GM12878 (cell line): ENCODE measurements at regions of chr3 and their contacts with region 1.

Region 1: DNA sequence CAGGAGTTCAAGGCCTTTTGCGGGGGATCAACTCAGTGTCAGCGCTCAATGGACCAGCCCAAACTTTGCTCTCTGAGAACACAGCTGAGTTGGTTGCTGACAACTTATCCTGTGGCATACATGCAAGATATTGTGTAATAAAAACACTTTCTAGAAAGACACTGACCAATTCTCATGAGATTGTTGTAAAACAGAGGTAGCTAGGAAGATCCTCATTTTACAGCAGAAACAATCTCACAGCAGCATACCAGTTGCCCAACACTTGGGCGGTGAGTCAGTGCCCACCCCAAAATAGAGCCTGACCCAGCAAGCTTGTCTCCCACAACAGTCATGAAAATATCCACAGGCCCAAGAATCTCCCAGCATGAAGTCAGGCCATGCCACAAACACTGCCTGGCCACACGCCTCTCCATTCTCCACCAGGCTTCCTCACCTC is 18.2 kb downstream of the KLHL6 start:
- DNase-seq: no peak
- ATAC-seq: no peak
- H3K4me3 ChIP-seq: no peak overlapping the region
- H3K27ac ChIP-seq: no peak overlapping the region
- H3K4me1 ChIP-seq: peaks cover 75% of the 10 kb centered on the region
- H3K27me3 ChIP-seq: no peaks in the 10 kb centered on the region
- CTCF ChIP-seq: no peak
- EP300 ChIP-seq: no peak
- POLR2A ChIP-seq: no peak
- RAD21 ChIP-seq: no peak

Region 2: DNA sequence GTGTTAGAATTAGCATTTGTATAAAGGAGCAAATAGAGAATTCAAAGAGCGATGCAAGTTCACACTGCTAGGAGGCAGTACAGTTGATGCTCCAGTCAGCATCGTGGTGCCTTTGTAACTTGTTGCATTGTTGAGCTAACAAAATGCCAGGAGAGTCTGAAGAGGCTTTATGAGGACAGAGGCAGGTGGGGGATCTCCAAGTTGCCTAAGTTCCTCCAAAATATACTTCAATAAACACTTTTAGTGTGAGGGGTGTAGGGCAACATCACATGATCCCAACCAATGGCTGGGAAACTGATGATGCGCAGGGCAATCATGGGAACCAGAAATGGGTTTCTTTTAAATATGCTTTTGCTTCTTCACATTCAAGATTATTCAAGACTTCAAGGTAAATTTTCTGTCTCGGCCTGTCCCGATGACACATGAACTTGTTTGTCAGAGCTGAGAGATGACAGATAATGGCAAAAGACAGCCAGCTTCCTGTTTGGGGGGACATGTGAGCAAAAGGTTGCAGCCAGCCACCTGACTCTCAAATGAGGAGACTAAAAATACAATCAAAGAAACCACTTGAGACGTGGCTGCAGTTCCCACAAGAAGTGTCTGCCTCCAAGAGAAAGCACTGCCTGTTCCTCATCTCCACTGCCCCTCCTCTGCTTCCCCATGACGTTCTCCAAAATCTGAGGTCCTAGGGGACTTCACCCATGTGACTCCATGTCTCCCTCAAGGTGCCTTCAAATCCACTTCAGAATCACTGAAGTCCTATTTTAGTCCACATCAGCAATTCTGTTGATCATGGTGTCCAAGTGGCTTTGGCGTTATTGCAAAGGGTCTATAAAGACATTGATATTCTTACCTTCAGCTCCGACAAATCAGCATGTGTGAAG is 21.1 kb before region 1 on chr3:
- CTCF ChIA-PET with region 1: interaction called, 10 read pairs
- POLR2A ChIA-PET with region 1: interaction called, 181 read pairs
- RAD21 ChIA-PET with region 1: interaction called, 245 read pairs
- SMC1A ChIA-PET with region 1: interaction called, 190 read pairs
- in situ Hi-C with region 1: no loop called
- intact Hi-C with region 1: no loop called
- DNase-seq: peak; percentile 77
- ATAC-seq: peak; percentile 61
- H3K4me3 ChIP-seq: no peak overlapping the region
- H3K27ac ChIP-seq: peak overlapping the region; percentile 7; the same call in 1 of the 2 replicates
- H3K4me1 ChIP-seq: peaks cover 43% of the 10 kb centered on the region
- H3K27me3 ChIP-seq: no peaks in the 10 kb centered on the region
- CTCF ChIP-seq: peak; percentile 15 to 21 (median 20); a peak in 3 of 6 replicates
- EP300 ChIP-seq: peak in 1 of 2 experiments; percentile 91; a peak in 2 of 4 replicates
- POLR2A ChIP-seq: peak; percentile 33; the same call in 1 of the 2 replicates
- RAD21 ChIP-seq: peak; percentile 32

Region 3: GRCh38 chr3:183576487-183577107 is 39.3 kb after region 1 on chr3:
- CTCF ChIA-PET with region 1: interaction called, 5 read pairs
- POLR2A ChIA-PET with region 1: interaction called, 7 read pairs
- RAD21 ChIA-PET with region 1: interaction called, 82 read pairs
- SMC1A ChIA-PET with region 1: interaction called, 22 read pairs
- in situ Hi-C with region 1: no loop called
- intact Hi-C with region 1: loop called (anchors 1 kb)
- DNase-seq: no peak
- ATAC-seq: no peak
- H3K4me3 ChIP-seq: no peak overlapping the region
- H3K27ac ChIP-seq: no peak overlapping the region
- H3K4me1 ChIP-seq: peaks cover 8% of the 10 kb centered on the region; the same call in 1 of the 2 replicates
- H3K27me3 ChIP-seq: peaks cover 0 to 21% of the 10 kb centered on the region in 2 experiments; a peak in 2 of 4 replicates
- CTCF ChIP-seq: no peak
- EP300 ChIP-seq: no peak
- POLR2A ChIP-seq: no peak
- RAD21 ChIP-seq: no peak

Region 4: DNA sequence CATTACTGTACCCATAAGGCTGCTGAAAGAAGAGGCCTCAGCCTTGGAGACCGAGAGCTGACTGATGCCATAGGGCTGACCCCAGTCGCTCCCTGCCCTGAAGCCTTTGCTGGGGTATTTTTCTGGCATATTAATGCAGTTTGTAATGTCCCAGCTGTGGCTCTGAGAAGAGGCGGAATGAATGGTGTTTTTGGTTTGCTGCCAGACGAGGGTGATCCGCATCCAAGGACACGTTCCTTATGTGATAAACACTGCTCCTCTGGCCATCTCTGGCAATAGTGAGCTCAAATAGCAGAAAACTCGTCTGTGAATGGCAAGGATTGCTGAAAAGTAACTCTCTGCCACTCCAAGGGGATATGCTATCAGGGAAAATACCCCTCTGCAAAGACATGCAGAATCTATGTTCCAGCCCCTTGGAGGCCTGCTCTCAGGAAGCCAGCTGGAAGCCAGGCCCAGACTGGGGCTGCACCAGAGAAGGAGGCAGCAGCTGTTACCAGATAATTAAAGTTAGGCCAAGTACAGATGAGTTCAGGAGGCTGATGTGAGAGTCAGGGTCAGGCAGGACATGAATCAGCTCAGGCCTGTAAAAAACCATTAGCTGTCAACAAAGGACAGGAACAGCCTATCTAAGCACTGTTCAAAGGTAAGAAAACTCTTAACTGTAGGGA is 47.1 kb after region 1 on chr3:
- CTCF ChIA-PET with region 1: interaction called, 5 read pairs
- POLR2A ChIA-PET with region 1: interaction called, 20 read pairs
- RAD21 ChIA-PET with region 1: interaction called, 82 read pairs
- SMC1A ChIA-PET with region 1: interaction called, 15 read pairs
- in situ Hi-C with region 1: no loop called
- intact Hi-C with region 1: no loop called
- DNase-seq: no peak
- ATAC-seq: peak; percentile 24
- H3K4me3 ChIP-seq: no peak overlapping the region
- H3K27ac ChIP-seq: no peak overlapping the region
- H3K4me1 ChIP-seq: peaks cover 4% of the 10 kb centered on the region; the same call in 1 of the 2 replicates
- H3K27me3 ChIP-seq: peaks cover 0 to 10% of the 10 kb centered on the region in 2 experiments; a peak in 2 of 4 replicates
- CTCF ChIP-seq: no peak
- EP300 ChIP-seq: no peak
- POLR2A ChIP-seq: no peak
- RAD21 ChIP-seq: no peak